CD4-positive, alpha-beta T cell (primary cell): ENCODE measurements at regions of chr9 and their contacts with region 1.

Region 1: GRCh38 chr9:23357651-23358050 is 468.4 kb downstream of the ELAVL2 start:
- DNase-seq: no peak
- ATAC-seq: no peak
- H3K4me3 ChIP-seq: no peak overlapping the region
- H3K4me3 Mint-ChIP-seq: no peak overlapping the region
- H3K27ac ChIP-seq: no peak overlapping the region
- H3K27ac Mint-ChIP-seq: no peak overlapping the region
- H3K4me1 ChIP-seq: no peaks in the 10 kb centered on the region
- H3K4me1 Mint-ChIP-seq: no peaks in the 10 kb centered on the region
- H3K27me3 ChIP-seq: no peaks in the 10 kb centered on the region
- H3K27me3 Mint-ChIP-seq: no peaks in the 10 kb centered on the region
- CTCF ChIP-seq: no peak

Region 2: DNA sequence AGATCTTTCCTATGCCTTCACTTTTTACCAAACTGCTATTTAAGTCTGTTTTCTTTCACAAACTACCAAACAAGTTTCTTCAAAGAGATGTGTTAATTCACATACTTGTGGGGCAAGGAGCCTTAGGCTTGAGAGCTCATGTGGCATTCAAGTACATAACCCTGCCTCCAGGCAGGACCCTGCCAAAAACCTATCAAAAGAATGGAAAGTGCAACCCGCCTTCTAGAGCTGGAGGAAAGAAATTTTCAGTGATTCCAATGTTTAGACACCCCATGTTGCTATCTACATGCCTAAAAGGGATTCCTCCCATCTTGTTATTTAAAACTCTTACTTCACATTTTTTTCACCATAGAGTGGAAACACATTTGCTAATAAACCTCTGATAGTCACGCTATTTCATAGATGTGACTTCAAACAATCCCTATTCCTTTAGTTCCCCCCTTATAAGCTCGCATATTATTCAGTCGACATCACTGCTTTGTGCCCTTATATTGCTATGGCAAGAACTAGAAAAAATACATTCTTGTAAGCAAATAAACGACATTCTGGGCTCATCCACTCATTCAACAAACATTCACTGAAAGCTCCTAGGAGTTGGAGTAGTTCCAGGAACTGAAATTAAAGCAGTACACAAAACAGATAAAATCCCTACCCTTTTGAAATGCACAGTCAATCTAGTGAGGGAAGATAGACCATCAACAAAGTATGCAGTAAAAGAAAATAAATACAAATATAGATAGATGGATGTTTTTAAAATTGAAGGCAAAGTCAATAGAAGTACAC is 49.7 kb before region 1 on chr9:
- CTCF ChIA-PET with region 1: no interaction called
- POLR2A ChIA-PET with region 1: no interaction called
- intact Hi-C with region 1: loop called in 1 of 2 experiments (anchors 10 kb)
- DNase-seq: no peak
- ATAC-seq: no peak
- H3K4me3 ChIP-seq: no peak overlapping the region
- H3K4me3 Mint-ChIP-seq: no peak overlapping the region
- H3K27ac ChIP-seq: no peak overlapping the region
- H3K27ac Mint-ChIP-seq: no peak overlapping the region
- H3K4me1 ChIP-seq: no peaks in the 10 kb centered on the region
- H3K4me1 Mint-ChIP-seq: no peaks in the 10 kb centered on the region
- H3K27me3 ChIP-seq: no peaks in the 10 kb centered on the region
- H3K27me3 Mint-ChIP-seq: no peaks in the 10 kb centered on the region
- CTCF ChIP-seq: no peak

Region 3: DNA sequence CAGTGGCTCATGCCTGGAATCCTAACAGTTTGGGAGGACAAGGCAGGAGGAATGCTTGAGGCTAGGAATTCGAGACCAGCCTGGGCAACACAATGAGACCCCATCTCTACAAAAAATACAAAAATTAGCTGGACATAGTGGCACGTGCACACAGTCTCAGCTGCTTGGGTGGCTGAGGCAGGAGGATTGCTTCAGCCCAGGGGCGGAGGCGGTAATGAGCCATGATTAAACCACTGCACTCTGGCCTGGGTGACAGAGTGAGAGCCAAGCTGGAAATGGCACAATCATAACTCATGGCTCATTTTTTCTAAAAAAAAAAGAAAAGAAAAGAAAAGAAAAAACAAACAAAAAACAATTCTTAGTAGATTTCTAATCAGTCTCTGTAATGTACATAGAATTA is 22.2 kb after region 1 on chr9:
- CTCF ChIA-PET with region 1: no interaction called
- POLR2A ChIA-PET with region 1: no interaction called
- intact Hi-C with region 1: loop called (anchors 1 kb)
- DNase-seq: no peak
- ATAC-seq: no peak
- H3K4me3 ChIP-seq: no peak overlapping the region
- H3K4me3 Mint-ChIP-seq: no peak overlapping the region
- H3K27ac ChIP-seq: no peak overlapping the region
- H3K27ac Mint-ChIP-seq: no peak overlapping the region
- H3K4me1 ChIP-seq: no peaks in the 10 kb centered on the region
- H3K4me1 Mint-ChIP-seq: no peaks in the 10 kb centered on the region
- H3K27me3 ChIP-seq: no peaks in the 10 kb centered on the region
- H3K27me3 Mint-ChIP-seq: no peaks in the 10 kb centered on the region
- CTCF ChIP-seq: no peak